Endothelial cell of umbilical vein (primary cell): ENCODE measurements at regions of chr12 and their contacts with region 1.

Region 1: GRCh38 chr12:43676183-43676813 is 82.3 kb downstream of the PUS7L start:
- DNase-seq: peak; percentile 16
- H3K4me3 ChIP-seq: no peak overlapping the region
- H3K27ac ChIP-seq: no peak overlapping the region
- H3K4me1 ChIP-seq: no peaks in the 10 kb centered on the region
- H3K27me3 ChIP-seq: peaks cover 1 to 17% of the 10 kb centered on the region in 2 experiments
- CTCF ChIP-seq: peak; percentile 57 to 68
- POLR2A ChIP-seq: no peak

Region 2: DNA sequence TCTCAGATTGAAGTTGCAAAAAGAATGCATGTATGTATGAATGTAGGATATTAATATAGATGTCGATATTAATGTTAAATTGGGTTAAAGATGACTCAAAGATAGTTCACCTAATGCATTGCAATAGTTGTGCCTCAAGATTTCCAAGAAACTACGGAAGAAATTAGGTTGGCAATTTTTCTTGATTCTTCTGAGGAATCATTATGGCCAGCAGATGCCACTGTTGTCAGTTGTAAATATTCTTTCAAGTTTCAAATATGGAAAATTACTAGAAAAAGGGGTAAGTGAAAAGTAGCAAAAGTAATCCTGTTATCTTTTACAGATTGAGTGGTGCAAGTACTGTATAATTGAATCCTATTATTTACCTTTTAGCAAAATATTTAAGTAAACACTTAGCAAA is 326.4 kb before region 1 on chr12:
- CTCF ChIA-PET with region 1: interaction called, 3 read pairs
- POLR2A ChIA-PET with region 1: no interaction called
- dilution Hi-C with region 1: no loop called
- intact Hi-C with region 1: loop called (anchors 2 kb)
- DNase-seq: peak; percentile 33
- H3K4me3 ChIP-seq: no peak overlapping the region
- H3K27ac ChIP-seq: no peak overlapping the region
- H3K4me1 ChIP-seq: no peaks in the 10 kb centered on the region
- H3K27me3 ChIP-seq: no peaks in the 10 kb centered on the region
- CTCF ChIP-seq: peak; percentile 2 to 21
- POLR2A ChIP-seq: no peak

Region 3: DNA sequence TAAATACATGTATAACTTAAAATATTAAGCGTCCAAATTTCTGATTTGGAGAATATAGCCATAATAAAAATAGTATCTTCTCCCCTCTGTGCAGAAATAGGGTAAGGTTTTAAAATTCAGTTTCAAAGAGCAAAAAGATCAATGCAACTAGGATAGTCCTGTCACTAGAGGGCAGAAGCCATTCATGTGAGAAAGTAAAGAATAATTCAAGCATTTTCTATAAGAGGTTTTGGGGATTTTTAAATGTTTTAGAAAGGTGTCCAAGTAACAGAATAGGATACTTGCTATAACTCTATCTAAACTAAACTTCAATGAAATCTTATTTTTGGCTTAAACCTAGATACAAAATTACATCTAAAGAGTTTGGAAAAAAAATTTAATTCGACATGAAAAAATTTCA is 174.6 kb before region 1 on chr12:
- CTCF ChIA-PET with region 1: interaction called, 3 read pairs
- POLR2A ChIA-PET with region 1: no interaction called
- dilution Hi-C with region 1: no loop called
- intact Hi-C with region 1: loop called (anchors 10 kb)
- DNase-seq: peak; percentile 12
- H3K4me3 ChIP-seq: no peak overlapping the region
- H3K27ac ChIP-seq: no peak overlapping the region
- H3K4me1 ChIP-seq: no peaks in the 10 kb centered on the region
- H3K27me3 ChIP-seq: no peaks in the 10 kb centered on the region
- CTCF ChIP-seq: peak; percentile 14 to 18
- POLR2A ChIP-seq: no peak

Region 4: GRCh38 chr12:43648636-43649035 is 27.7 kb before region 1 on chr12:
- CTCF ChIA-PET with region 1: no interaction called
- POLR2A ChIA-PET with region 1: no interaction called
- dilution Hi-C with region 1: no loop called
- intact Hi-C with region 1: no loop called
- DNase-seq: no peak
- H3K4me3 ChIP-seq: no peak overlapping the region
- H3K27ac ChIP-seq: no peak overlapping the region
- H3K4me1 ChIP-seq: no peaks in the 10 kb centered on the region
- H3K27me3 ChIP-seq: peaks cover 0 to 2% of the 10 kb centered on the region in 2 experiments
- CTCF ChIP-seq: no peak
- POLR2A ChIP-seq: no peak